H1 (cell line): ENCODE measurements at regions of chr5 and their contacts with region 1.

Region 1: GRCh38 chr5:179974946-179975712 is 67.4 kb upstream of the TBC1D9B start:
- DNase-seq: peak; percentile 57 to 76
- H3K4me3 ChIP-seq: no peak overlapping the region
- H3K27ac ChIP-seq: no peak overlapping the region
- H3K4me1 ChIP-seq: no peaks in the 10 kb centered on the region; a peak in 1 of 7 replicates
- H3K27me3 ChIP-seq: no peaks in the 10 kb centered on the region
- CTCF ChIP-seq: peak; percentile 73 to 85 (median 81)
- EP300 ChIP-seq: peak in 1 of 2 experiments; percentile 26; a peak in 1 of 3 replicates
- POLR2A ChIP-seq: no peak
- RAD21 ChIP-seq: peak; percentile 67 to 77

Region 2: GRCh38 chr5:179914032-179914755 is 60.9 kb before region 1 on chr5:
- CTCF ChIA-PET with region 1: interaction called, 14 read pairs
- POLR2A ChIA-PET with region 1: no interaction called
- DNase-seq: no peak
- H3K4me3 ChIP-seq: no peak overlapping the region
- H3K27ac ChIP-seq: no peak overlapping the region
- H3K4me1 ChIP-seq: peaks cover 0 to 8% (median 3%) of the 10 kb centered on the region in 4 experiments; a peak in 6 of 7 replicates
- H3K27me3 ChIP-seq: no peaks in the 10 kb centered on the region; a peak in 1 of 7 replicates
- CTCF ChIP-seq: no peak
- EP300 ChIP-seq: no peak
- POLR2A ChIP-seq: no peak
- RAD21 ChIP-seq: no peak